Naive thymus-derived CD8-positive, alpha-beta T cell (primary cell): ENCODE measurements at regions of chr6 and their contacts with region 1.

Region 1: DNA sequence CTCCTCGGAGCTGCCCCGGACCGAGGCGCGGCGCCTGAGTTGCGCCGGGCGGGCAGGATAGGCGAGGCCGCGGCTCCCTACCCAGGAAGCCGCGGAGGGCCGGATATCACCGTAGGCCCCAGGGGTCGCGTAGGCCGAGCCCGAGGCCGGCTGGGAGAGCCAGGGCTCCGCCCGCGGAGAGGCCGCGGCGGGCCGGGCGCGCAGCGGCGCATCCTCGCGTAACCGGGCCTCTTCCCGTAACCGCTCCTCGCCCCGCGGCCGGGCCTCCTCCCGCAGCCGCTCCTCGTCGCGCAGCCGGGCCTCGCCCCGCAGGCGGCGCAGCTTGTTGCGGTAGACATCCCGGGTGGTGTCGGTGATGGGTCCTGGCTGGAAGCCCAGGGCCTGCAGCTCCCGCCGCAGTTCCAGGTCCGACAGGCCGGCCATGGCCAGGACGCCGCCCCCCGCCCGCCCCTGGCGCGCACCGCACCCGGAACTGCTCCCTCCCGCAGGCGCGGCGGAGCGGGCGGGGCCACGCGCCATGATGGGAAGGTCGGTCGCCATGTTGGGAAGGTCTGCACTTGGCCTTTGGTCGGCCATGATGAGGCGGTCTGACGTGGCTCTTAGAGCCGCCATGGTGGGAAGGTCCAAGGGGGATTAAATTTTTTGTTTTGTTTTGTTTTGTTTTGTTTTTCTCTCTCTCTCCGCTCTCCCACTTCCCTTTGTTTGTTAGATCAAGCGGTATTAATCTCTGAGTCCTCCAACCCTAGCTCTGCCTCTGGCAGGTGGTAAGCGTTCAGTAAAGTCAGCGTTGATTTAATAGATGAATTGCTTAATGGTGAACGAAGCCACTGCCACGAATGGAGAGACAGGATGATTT is at the start of gene LEMD2:
- DNase-seq: peak; percentile 87 to 94 (median 92)
- ATAC-seq: peak; percentile 89 to 90
- H3K4me3 Mint-ChIP-seq: peak within 1 kb of the TSS; percentile 91 to 99 (median 96)
- H3K27ac Mint-ChIP-seq: peak within 1 kb of the TSS; percentile 95 to 100 (median 98)
- H3K4me1 Mint-ChIP-seq: peaks cover 37 to 57% (median 49%) of the 10 kb centered on the region in 4 donors
- H3K27me3 Mint-ChIP-seq: peaks cover 0 to 2% (median 0%) of the 10 kb centered on the region in 5 donors
- polyA plus RNA-seq, gene LEMD2: 24.6 to 43.9 (median 26.0) TPM

Region 2: DNA sequence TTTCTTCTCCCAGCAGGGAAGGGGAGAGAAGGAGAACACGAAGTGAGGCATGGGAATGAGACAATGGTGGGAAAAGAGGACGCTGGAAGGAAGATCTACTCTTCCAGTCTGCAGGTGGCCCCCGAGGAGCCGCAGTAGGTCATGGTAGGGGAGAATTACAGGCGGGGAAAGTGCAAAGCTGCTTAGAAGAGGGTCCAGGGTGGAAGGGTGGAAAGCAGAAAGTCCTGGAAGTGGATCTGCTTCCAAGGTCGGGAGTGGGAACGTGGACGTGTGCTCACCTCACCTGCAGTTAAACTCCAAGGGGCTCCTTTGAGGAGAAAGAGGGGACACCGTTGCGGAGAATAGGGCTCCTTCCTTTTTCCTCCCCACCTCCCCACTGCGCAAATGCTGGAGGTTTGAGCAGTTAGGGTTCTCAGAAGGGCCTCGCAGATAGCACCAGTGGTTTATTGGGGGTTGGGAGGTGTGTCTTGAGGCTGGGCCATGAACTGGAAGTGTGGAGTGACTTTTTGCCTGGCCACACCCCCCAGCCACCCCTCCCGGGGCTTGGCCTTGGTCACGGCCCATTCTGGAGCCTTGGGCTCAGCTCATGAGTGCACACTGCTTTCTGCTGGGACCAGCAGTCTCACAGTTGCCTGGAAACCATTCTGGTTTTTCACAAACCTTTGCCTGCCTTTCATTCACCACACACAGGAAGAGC is 115.3 kb after region 1 on chr6:
- POLR2A ChIA-PET with region 1: interaction called, 13 read pairs
- DNase-seq: peak in 9 of 10 donors; percentile 32 to 89 (median 81)
- ATAC-seq: peak; percentile 88
- H3K4me3 Mint-ChIP-seq: peak overlapping the region; percentile 60 to 87 (median 76)
- H3K27ac Mint-ChIP-seq: peak overlapping the region; percentile 88 to 97 (median 93)
- H3K4me1 Mint-ChIP-seq: peaks cover 56 to 85% (median 80%) of the 10 kb centered on the region in 4 donors
- H3K27me3 Mint-ChIP-seq: no peaks in the 10 kb centered on the region